AG04450 (cell line): ENCODE measurements at regions of chr6 and their contacts with region 1.

Region 1: GRCh38 chr6:155174576-155175211 is 89.1 kb upstream of the CLDN20 start:
- DNase-seq: peak; percentile 55
- H3K4me3 ChIP-seq: no peak overlapping the region
- H3K27ac ChIP-seq: no peak overlapping the region
- H3K27me3 ChIP-seq: no peaks in the 10 kb centered on the region
- CTCF ChIP-seq: peak; percentile 81

Region 2: DNA sequence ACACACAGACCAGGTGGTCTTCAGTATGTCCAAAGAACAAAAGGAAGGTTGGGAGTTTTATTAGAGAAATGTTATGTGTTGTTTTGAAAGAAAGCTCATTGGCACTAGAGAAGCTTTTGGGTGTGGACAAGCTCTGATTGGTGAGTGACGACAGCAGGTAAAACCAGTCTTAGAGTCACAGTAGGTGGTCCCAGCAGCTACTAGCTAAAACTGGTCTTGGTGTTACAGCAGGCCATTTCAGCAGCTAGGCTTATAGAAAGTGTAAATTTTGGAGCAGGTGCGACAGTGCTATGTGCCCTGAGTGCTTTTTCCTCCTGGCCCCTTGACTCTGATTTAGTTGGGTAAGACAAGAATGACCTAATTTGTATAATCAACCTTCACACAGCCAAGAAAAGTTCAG is 92.7 kb after region 1 on chr6:
- CTCF ChIA-PET with region 1: interaction called, 14 read pairs
- POLR2A ChIA-PET with region 1: no interaction called
- DNase-seq: no peak
- H3K4me3 ChIP-seq: no peak overlapping the region
- H3K27ac ChIP-seq: no peak overlapping the region
- H3K27me3 ChIP-seq: no peaks in the 10 kb centered on the region
- CTCF ChIP-seq: no peak

Region 3: DNA sequence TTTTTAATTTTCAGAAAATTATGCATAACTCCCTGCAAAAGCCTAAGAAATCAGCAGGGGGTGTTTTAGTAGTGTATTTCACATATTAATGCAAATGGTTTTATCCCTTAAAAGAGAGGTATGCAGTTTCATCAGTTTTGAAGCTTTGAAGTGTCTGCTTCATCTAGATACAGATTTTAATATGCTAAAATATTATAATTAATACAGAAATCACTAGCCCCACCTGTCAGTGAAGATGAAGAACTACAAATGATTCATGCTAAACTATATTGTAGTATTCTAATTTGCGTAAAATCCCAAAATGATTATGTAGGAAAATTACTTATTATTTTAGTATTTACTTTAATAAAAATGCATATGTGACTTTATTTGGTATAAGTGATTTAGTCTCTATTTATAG is 142.5 kb after region 1 on chr6:
- CTCF ChIA-PET with region 1: interaction called, 26 read pairs
- POLR2A ChIA-PET with region 1: no interaction called
- DNase-seq: no peak
- H3K4me3 ChIP-seq: no peak overlapping the region
- H3K27ac ChIP-seq: no peak overlapping the region
- H3K27me3 ChIP-seq: no peaks in the 10 kb centered on the region
- CTCF ChIP-seq: peak; percentile 28; the same call in 1 of the 2 replicates

Region 4: DNA sequence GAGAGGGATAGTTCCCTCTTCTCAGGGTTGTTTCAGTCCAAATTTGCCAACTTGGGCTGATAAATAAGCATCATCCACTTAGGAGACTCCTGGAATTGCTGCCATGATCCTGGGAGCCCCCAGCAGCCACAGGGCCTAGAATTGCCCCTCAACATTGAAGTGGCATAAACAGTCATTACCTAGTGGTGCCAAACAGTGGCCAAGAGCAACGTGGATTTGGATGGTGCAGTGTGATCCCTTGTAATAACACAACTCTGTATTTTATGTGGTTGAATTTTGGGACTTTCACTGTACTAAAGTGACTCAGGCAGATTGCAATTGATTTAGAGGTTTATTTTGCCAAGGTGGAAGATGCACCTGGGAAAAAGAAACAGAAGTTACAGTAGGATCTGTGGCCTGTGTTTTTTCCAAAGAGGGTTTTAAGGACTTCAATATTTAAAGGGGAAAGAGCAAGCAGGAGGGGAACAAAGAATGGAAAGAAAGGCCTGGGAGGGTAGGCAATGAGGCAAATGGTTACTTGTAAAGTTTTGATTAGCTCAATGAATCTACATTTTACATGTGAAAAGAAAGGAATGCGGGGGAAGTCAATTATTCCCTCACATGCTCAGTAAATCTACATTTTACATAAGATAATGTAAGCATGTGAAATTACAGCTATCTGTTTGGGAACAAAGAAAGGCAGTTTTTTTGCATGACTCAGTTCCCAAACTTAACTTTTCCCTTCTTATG is 448.9 kb after region 1 on chr6:
- CTCF ChIA-PET with region 1: no interaction called
- POLR2A ChIA-PET with region 1: no interaction called
- DNase-seq: no peak
- H3K4me3 ChIP-seq: no peak overlapping the region
- H3K27ac ChIP-seq: no peak overlapping the region
- H3K27me3 ChIP-seq: no peaks in the 10 kb centered on the region
- CTCF ChIP-seq: no peak